CD14-positive monocyte (primary cell): ENCODE measurements at regions of chrX and their contacts with region 1.

Region 1: GRCh38 chrX:113929004-113929403 is 654.9 kb upstream of the HTR2C start:
- DNase-seq: peak; percentile 15 to 43 (median 32)
- H3K4me3 ChIP-seq: no peak overlapping the region
- H3K4me3 Mint-ChIP-seq: no peak overlapping the region
- H3K27ac ChIP-seq: no peak overlapping the region
- H3K27ac Mint-ChIP-seq: no peak overlapping the region
- H3K4me1 ChIP-seq: no peaks in the 10 kb centered on the region
- H3K4me1 Mint-ChIP-seq: no peaks in the 10 kb centered on the region
- H3K27me3 ChIP-seq: no peaks in the 10 kb centered on the region
- H3K27me3 Mint-ChIP-seq: peaks cover 0 to 1% (median 0%) of the 10 kb centered on the region in 3 donors
- CTCF ChIP-seq: peak; percentile 70

Region 2: DNA sequence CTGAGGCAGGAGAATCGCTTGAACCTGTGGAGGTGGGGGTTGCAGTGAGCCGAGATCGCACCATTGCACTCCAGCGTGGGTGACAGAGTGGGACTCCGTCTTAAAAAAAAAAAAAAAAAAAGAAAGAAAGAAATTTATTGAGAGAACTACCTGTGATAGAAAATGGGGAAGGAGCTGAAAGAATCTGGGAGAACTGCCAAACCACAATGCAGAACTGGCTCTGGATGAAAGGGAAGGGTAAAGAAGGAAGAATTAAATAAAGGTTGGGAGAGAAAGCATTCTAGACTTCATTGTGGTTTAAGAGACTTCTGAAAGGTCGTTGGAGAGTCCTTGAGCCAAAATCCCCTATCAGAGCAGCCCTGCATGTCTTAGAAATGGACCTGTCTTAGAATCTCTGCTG is 87.0 kb after region 1 on chrX:
- intact Hi-C with region 1: no loop called
- DNase-seq: peak in 2 of 3 donors; percentile 4 to 6
- H3K4me3 ChIP-seq: no peak overlapping the region
- H3K4me3 Mint-ChIP-seq: no peak overlapping the region
- H3K27ac ChIP-seq: no peak overlapping the region
- H3K27ac Mint-ChIP-seq: no peak overlapping the region
- H3K4me1 ChIP-seq: peaks cover 6 to 11% of the 10 kb centered on the region in 2 donors
- H3K4me1 Mint-ChIP-seq: no peaks in the 10 kb centered on the region
- H3K27me3 ChIP-seq: no peaks in the 10 kb centered on the region
- H3K27me3 Mint-ChIP-seq: peaks cover 0 to 1% (median 0%) of the 10 kb centered on the region in 3 donors
- CTCF ChIP-seq: no peak

Region 3: DNA sequence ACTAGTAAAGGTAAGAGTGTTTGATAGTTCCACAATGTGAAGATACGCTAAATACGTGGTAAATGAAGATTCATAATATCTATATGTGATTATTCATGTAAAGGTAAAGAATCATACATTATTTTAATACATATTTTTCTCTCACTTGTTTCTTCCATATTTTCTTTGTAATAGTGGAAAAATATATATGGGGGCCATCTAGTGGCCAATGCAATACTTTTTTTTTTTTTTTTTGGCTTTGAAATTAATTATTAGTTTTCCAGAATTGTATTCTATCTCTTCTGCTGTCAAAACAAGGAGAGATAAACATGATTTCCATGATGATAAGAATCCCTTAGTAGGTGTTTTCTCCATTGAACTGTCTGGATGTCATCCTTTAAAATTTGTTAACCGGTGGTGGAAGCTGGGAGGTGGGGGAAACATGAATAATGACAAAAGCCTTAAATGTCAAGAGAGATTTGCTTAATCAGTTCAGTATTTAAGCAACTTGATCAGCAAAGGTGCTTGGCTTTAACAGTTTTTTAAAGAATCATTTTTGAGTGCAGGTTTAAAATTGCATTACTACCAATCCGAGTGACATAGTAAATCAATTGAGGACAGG is 146.2 kb after region 1 on chrX:
- intact Hi-C with region 1: loop called (anchors 10 kb)
- DNase-seq: no peak
- H3K4me3 ChIP-seq: no peak overlapping the region
- H3K4me3 Mint-ChIP-seq: no peak overlapping the region
- H3K27ac ChIP-seq: no peak overlapping the region
- H3K27ac Mint-ChIP-seq: no peak overlapping the region
- H3K4me1 ChIP-seq: no peaks in the 10 kb centered on the region
- H3K4me1 Mint-ChIP-seq: peaks cover 2% of the 10 kb centered on the region
- H3K27me3 ChIP-seq: no peaks in the 10 kb centered on the region
- H3K27me3 Mint-ChIP-seq: peaks cover 0 to 5% (median 0%) of the 10 kb centered on the region in 3 donors
- CTCF ChIP-seq: peak; percentile 46